Activated B cell treated with CpG ODN at 0.5 μM for 24 hours (primary cell): ENCODE measurements at regions of chr2 and their contacts with region 1.

Region 1: DNA sequence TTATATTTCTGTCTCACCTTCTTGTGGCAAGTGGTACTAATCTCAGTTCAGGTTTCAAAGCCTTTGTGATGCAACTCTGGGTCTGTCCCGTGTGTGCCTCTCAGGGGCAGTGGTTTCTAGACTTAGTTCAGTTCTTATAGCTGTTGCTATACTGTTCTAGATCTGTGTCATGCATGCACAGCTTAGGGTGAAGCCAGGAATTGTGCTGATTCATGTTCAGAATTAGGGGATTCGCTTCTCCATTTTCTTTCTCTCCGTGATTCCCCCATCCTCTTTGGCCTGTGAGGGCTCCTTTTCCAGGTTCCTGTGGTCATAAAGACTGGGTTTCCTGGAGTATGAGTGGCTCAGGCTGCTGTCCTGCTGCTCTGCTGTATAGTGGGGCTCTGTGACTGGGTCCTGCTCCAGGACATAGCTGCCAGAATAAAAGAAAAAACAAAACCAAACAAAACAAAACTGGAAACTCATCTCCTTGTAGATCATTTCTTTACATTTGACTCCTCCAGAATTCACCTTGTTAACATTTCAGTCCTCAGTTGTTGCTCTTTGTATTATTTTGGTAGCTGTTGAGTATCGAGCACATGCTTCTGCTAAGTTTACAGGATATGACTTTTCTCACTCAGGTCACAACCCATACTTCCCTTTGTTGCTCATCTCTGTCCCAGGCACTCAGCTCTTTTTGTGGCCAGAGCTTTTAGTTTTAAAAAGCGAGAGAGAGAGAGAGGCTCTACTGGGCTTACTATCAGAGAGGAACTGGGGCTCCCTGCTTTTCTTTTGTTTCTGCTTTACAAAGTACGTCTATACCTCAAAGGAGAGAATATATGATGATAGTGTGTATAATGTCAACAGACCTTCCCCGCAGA is 34.2 kb downstream of the CERS6 start:
- DNase-seq: no peak
- ATAC-seq: peak; percentile 86
- H3K4me3 Mint-ChIP-seq: peak overlapping the region; percentile 66
- H3K27ac Mint-ChIP-seq: peak overlapping the region; percentile 88
- H3K4me1 Mint-ChIP-seq: peaks cover 35% of the 10 kb centered on the region
- H3K27me3 Mint-ChIP-seq: no peaks in the 10 kb centered on the region
- CTCF ChIP-seq: no peak

Region 2: GRCh38 chr2:168470320-168471162 is 19.7 kb before region 1 on chr2:
- CTCF ChIA-PET with region 1: no interaction called
- POLR2A ChIA-PET with region 1: interaction called, 3 read pairs
- intact Hi-C with region 1: loop called (anchors 1 kb)
- DNase-seq: no peak
- ATAC-seq: peak; percentile 14
- H3K4me3 Mint-ChIP-seq: no peak overlapping the region
- H3K27ac Mint-ChIP-seq: no peak overlapping the region
- H3K4me1 Mint-ChIP-seq: peaks cover 55% of the 10 kb centered on the region
- H3K27me3 Mint-ChIP-seq: no peaks in the 10 kb centered on the region
- CTCF ChIP-seq: no peak

Region 3: GRCh38 chr2:168530982-168531622 is 40.9 kb after region 1 on chr2:
- CTCF ChIA-PET with region 1: no interaction called
- POLR2A ChIA-PET with region 1: interaction called, 5 read pairs
- intact Hi-C with region 1: loop called (anchors 1 kb)
- DNase-seq: no peak
- ATAC-seq: peak; percentile 61
- H3K4me3 Mint-ChIP-seq: peak overlapping the region; percentile 65
- H3K27ac Mint-ChIP-seq: peak overlapping the region; percentile 82
- H3K4me1 Mint-ChIP-seq: peaks cover 67% of the 10 kb centered on the region
- H3K27me3 Mint-ChIP-seq: no peaks in the 10 kb centered on the region
- CTCF ChIP-seq: no peak

Region 4: DNA sequence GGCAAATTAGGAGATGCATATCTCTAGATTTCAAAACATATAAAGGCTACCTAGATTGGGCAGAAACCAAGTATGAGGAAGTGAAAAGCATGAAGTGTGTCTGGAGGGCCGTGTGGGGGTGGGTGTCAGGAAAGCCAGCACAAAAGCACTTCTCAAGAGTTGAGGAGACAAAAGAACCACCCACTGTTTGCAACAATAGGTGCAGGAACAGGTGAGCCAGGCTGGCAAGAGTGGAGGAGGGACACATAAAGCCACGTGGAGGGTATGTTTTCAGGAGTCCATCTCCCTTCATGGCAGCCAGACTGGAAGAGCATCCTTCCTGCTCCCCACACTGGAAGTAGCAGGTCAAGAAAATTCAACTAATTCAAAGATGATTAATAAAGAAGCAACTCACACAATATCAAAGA is 62.2 kb after region 1 on chr2:
- CTCF ChIA-PET with region 1: no interaction called
- POLR2A ChIA-PET with region 1: no interaction called
- intact Hi-C with region 1: loop called (anchors 5 kb)
- DNase-seq: no peak
- ATAC-seq: peak; percentile 84
- H3K4me3 Mint-ChIP-seq: peak overlapping the region; percentile 19
- H3K27ac Mint-ChIP-seq: peak overlapping the region; percentile 47
- H3K4me1 Mint-ChIP-seq: peaks cover 24% of the 10 kb centered on the region
- H3K27me3 Mint-ChIP-seq: no peaks in the 10 kb centered on the region
- CTCF ChIP-seq: no peak

Region 5: GRCh38 chr2:168601741-168602140 is 111.5 kb after region 1 on chr2:
- CTCF ChIA-PET with region 1: no interaction called
- POLR2A ChIA-PET with region 1: no interaction called
- intact Hi-C with region 1: loop called (anchors 2 kb)
- DNase-seq: no peak
- ATAC-seq: peak; percentile 74
- H3K4me3 Mint-ChIP-seq: peak overlapping the region; percentile 39
- H3K27ac Mint-ChIP-seq: peak overlapping the region; percentile 75
- H3K4me1 Mint-ChIP-seq: peaks cover 61% of the 10 kb centered on the region
- H3K27me3 Mint-ChIP-seq: no peaks in the 10 kb centered on the region
- CTCF ChIP-seq: no peak